Activated CD4-positive, alpha-beta T cell treated with anti-CD3 and anti-CD28 coated beads, Interleukin-2, amount 10 ng/mL, durations not matched to agents 24 days and 14 days (primary cell): ENCODE measurements at regions of chr17 and their contacts with region 1.

Region 1: DNA sequence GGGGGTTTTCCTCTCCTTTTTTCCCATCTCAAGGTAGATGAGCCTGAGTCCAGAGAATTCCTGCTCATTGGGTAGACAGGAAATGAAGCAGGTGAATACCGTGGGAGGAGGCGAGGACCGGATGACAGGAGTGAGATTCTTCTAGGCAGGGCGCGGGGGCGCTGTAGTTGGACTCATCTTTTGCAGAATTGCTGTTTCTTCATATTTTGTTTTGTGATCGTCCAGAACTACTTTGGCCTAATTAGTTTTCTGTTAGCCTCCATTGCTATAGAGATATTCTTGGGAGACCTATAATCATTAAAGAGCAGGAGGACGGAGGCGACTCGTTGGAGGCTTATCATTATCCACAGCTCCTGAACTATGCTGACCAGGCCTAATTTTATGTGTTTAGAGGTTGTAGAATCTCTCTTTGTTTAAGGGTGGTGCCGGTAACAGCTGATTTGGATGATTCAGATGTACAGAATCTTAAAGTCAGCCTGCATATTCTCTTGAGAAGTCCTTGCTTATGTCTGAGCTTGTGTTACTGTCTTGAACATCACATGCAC is 650 bp downstream of the ATP6V0A1 start:
- DNase-seq: peak; percentile 74
- H3K4me3 Mint-ChIP-seq: peak overlapping the region; percentile 89
- H3K27ac Mint-ChIP-seq: peak overlapping the region; percentile 86
- H3K4me1 Mint-ChIP-seq: peaks cover 36% of the 10 kb centered on the region
- H3K27me3 Mint-ChIP-seq: peaks cover 13% of the 10 kb centered on the region

Region 2: DNA sequence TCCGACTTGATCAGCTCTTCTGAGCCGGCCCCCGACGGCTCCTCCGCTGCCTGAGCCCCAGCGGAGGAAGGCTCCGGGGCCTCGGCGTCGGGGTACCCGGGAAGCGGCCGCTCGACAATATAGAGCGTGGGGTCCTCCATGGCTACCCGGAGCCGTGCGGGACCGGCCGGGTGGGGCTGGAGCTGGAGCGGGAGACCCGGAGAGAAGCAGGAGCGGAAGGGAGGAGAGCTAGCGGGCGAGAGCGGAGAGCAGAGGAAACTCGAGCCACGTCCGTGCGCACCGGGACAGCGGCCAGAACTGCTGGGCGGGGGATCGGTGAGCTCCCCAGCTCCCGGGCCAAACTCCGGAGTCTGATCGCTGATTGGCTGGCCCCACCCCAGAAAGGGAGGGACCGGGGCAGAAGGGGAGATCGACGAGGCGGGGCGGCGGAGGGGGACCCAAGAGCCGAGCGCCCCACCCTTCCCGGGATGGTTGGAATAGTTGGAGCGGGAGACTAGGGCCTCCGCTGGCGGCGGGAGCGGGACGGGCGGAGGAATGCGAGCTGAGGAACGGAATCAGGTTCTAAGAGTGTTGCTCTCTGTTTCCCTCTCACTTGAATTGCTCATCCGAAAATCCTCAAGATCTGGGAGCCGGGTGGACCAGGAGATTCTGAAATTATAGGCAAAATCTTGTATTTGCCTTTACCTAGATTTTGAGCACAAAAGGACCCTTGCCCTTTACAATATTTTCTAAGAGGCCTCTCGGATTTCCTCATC is 36.2 kb before region 1 on chr17 and contains the start of gene CAVIN1:
- intact Hi-C with region 1: loop called (anchors 5 kb)
- DNase-seq: peak; percentile 78
- H3K4me3 Mint-ChIP-seq: peak within 1 kb of the TSS; percentile 87
- H3K27ac Mint-ChIP-seq: peak within 1 kb of the TSS; percentile 48
- H3K4me1 Mint-ChIP-seq: peaks cover 21% of the 10 kb centered on the region
- H3K27me3 Mint-ChIP-seq: peaks cover 50% of the 10 kb centered on the region
- total RNA-seq, gene CAVIN1: 2.4 and 2.7 TPM in 2 replicates

Region 3: DNA sequence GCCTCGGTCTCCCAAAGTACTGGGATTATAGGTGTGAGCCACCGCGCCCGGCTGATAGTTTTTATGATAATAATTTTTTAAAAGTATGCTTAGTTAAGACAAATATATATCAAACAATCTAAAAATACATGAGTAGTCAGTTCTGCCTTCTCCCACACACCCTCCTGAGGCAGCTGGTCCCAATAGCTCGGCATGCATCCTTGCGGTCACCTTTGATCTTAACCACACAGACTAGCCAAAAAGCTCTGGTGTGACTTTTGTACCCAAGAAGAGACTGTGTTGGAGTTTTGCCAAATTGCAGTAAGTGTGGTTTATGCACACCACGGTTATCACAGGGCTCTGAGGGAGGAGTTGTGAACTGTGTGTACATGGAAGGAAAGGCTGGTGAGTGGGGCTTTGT is 25.0 kb after region 1 on chr17:
- intact Hi-C with region 1: loop called (anchors 2 kb)
- DNase-seq: peak; percentile 93
- H3K4me3 Mint-ChIP-seq: peak overlapping the region; percentile 51
- H3K27ac Mint-ChIP-seq: peak overlapping the region; percentile 52
- H3K4me1 Mint-ChIP-seq: peaks cover 16% of the 10 kb centered on the region
- H3K27me3 Mint-ChIP-seq: peaks cover 3% of the 10 kb centered on the region